HCT116 (cell line): ENCODE measurements at regions of chr19 and their contacts with region 1.

Region 1: DNA sequence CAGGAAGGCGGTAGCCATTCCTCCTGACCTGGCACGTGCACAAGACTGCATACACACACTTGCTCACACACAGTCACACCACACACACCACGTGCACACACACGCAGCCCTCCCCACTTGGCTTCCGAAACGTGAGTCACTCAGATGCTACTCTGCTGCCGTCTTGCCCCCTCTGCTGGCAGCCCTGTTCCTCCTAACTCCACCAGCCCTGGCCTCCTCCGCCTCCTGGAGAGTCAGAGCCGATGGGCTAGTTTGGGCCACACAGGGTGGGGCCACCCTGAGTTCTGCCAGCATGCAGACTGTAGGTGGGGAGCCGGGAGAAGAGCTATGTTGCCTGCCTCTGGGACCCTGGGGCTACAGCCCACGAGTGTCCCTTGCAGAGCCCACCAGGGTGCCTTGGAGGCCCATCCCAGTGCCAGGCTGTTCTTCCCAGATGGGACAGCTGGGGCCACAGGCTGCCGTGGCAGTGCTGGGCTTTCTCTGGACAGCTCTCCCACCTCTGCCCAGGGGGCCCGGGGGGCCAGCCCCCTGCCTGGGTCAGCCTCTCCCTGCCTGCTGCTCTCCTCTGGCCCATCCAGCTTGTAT is 12.1 kb downstream of the PIN1 start:
- DNase-seq: peak; percentile 56
- ATAC-seq: peak; percentile 94
- H3K4me3 ChIP-seq: no peak overlapping the region
- H3K27ac ChIP-seq: peak overlapping the region; percentile 1; the same call in 1 of the 2 replicates
- H3K4me1 ChIP-seq: peaks cover 0 to 14% of the 10 kb centered on the region in 2 experiments; a peak in 2 of 4 replicates
- H3K27me3 ChIP-seq: no peaks in the 10 kb centered on the region
- CTCF ChIP-seq: peak; percentile 46 to 73 (median 72); a peak in 5 of 6 replicates
- POLR2A ChIP-seq: no peak
- RAD21 ChIP-seq: peak; percentile 71

Region 2: GRCh38 chr19:9205501-9206113 is 641.6 kb before region 1 on chr19:
- CTCF ChIA-PET with region 1: no interaction called
- POLR2A ChIA-PET with region 1: no interaction called
- RAD21 ChIA-PET with region 1: no interaction called
- intact Hi-C with region 1: loop called (anchors 5 kb)
- DNase-seq: peak; percentile 34
- ATAC-seq: peak; percentile 85
- H3K4me3 ChIP-seq: no peak overlapping the region
- H3K27ac ChIP-seq: no peak overlapping the region
- H3K4me1 ChIP-seq: no peaks in the 10 kb centered on the region
- H3K27me3 ChIP-seq: no peaks in the 10 kb centered on the region
- CTCF ChIP-seq: peak; percentile 47 to 83 (median 76); a peak in 5 of 6 replicates
- POLR2A ChIP-seq: no peak
- RAD21 ChIP-seq: peak; percentile 82

Region 3: DNA sequence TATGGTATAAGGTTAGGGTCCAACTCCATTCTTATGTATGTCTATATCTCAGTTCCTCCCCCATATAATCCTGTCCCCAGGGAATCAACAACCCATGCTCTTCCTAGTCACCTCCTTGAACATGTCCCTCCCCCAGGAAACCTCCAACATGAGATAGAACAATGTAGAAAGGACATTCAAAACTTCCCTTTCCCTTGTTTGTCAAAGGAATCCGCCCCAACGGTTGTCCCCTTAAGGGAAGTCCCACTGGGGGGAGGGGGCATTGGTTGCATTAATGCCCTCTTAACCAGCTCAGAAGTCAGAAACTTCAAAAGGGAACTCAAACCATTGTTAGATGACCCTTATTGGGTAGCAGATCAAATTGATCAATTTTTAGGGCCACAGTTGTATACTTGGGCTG is 219.3 kb before region 1 on chr19:
- CTCF ChIA-PET with region 1: no interaction called
- POLR2A ChIA-PET with region 1: no interaction called
- RAD21 ChIA-PET with region 1: no interaction called
- intact Hi-C with region 1: loop called (anchors 5 kb)
- DNase-seq: no peak
- ATAC-seq: no peak
- H3K4me3 ChIP-seq: no peak overlapping the region
- H3K27ac ChIP-seq: no peak overlapping the region
- H3K4me1 ChIP-seq: no peaks in the 10 kb centered on the region
- H3K27me3 ChIP-seq: no peaks in the 10 kb centered on the region
- CTCF ChIP-seq: no peak
- POLR2A ChIP-seq: no peak
- RAD21 ChIP-seq: no peak

Region 4: GRCh38 chr19:9700229-9700981 is 146.8 kb before region 1 on chr19:
- CTCF ChIA-PET with region 1: no interaction called
- POLR2A ChIA-PET with region 1: no interaction called
- RAD21 ChIA-PET with region 1: no interaction called
- intact Hi-C with region 1: no loop called
- DNase-seq: no peak
- ATAC-seq: no peak
- H3K4me3 ChIP-seq: no peak overlapping the region
- H3K27ac ChIP-seq: no peak overlapping the region
- H3K4me1 ChIP-seq: no peaks in the 10 kb centered on the region
- H3K27me3 ChIP-seq: no peaks in the 10 kb centered on the region
- CTCF ChIP-seq: no peak
- POLR2A ChIP-seq: no peak
- RAD21 ChIP-seq: no peak

Region 5: GRCh38 chr19:9834726-9835506 is 12.3 kb before region 1 on chr19 and contains the start of gene PIN1:
- CTCF ChIA-PET with region 1: no interaction called
- POLR2A ChIA-PET with region 1: no interaction called
- RAD21 ChIA-PET with region 1: no interaction called
- intact Hi-C with region 1: loop called (anchors 1 kb)
- DNase-seq: peak; percentile 95
- ATAC-seq: peak; percentile 97
- H3K4me3 ChIP-seq: peak within 1 kb of the TSS; percentile 94 to 96
- H3K27ac ChIP-seq: peak within 1 kb of the TSS; percentile 56; the same call in 1 of the 2 replicates
- H3K4me1 ChIP-seq: peaks cover 4 to 18% of the 10 kb centered on the region in 2 experiments; a peak in 3 of 4 replicates
- H3K27me3 ChIP-seq: no peaks in the 10 kb centered on the region
- CTCF ChIP-seq: peak in 2 of 3 experiments; percentile 25 to 45; a peak in 3 of 6 replicates
- POLR2A ChIP-seq: no peak
- RAD21 ChIP-seq: no peak
- total RNA-seq, gene PIN1: 78.9 TPM

Region 6: DNA sequence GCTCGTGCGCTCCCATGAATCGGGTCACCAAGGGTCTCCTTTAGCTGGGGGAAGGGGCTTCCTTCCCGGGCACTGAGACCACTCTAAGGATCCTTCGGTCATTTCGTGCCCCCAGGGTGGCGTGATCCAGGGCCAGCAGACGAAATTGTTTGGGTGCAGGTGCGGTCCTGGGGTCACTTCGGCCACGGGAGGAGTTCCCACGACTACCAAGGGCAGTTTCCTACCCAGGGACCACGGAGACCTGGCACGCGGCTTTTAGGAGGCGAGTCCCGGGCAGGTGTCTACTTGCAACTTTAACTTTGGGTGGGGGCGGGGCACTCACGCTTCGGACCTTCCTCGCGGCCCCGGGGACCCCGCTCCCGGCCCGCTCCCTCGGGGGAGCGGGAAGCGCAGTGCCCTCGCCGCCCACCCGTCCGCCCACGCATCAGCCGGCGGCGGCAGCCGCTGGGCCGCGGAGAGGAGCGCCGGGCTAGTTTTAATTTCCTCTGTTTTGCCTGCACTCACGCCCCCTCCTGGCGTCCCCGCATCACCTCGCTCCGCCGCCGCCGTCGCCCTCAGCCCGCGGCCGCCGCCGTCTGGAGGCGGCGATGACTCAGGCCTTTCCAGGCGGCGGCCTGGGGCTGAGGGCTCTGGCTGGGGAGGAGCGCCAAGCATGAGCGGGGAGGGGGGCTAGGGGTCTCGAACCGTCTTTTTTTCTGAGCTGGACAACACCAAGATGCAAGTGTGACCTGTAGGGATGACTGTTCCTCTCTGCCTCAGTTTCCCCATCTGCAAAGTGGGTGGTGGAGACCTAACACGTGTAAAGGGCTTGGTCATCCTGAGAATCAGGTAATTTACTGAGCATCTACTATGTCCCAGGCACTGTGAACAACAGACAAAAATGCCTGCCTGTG is 67.4 kb after region 1 on chr19:
- CTCF ChIA-PET with region 1: no interaction called
- POLR2A ChIA-PET with region 1: no interaction called
- RAD21 ChIA-PET with region 1: no interaction called
- intact Hi-C with region 1: loop called (anchors 2 kb)
- DNase-seq: peak; percentile 53
- ATAC-seq: peak; percentile 87
- H3K4me3 ChIP-seq: peak overlapping the region; percentile 50 to 58
- H3K27ac ChIP-seq: peak overlapping the region; percentile 69
- H3K4me1 ChIP-seq: peaks cover 8 to 20% of the 10 kb centered on the region in 2 experiments; a peak in 3 of 4 replicates
- H3K27me3 ChIP-seq: no peaks in the 10 kb centered on the region
- CTCF ChIP-seq: peak; percentile 57 to 86 (median 63)
- POLR2A ChIP-seq: no peak
- RAD21 ChIP-seq: peak; percentile 67